ENCODE measurements at regions of chr11 and their contacts with region 1.

Region 1: GRCh38 chr11:94623120-94623735 is 56.1 kb downstream of the PIWIL4 start:
- DNase-seq: peak; percentile 36 to 44
- ATAC-seq: peak; percentile 98
- H3K4me3 ChIP-seq: no peak overlapping the region
- H3K27ac ChIP-seq: no peak overlapping the region
- H3K4me1 ChIP-seq: peaks cover 0 to 4% of the 10 kb centered on the region in 2 donors
- H3K27me3 ChIP-seq: no peaks in the 10 kb centered on the region
- CTCF ChIP-seq: peak; percentile 86 to 94 (median 89)
- POLR2A ChIP-seq: no peak

Region 2: DNA sequence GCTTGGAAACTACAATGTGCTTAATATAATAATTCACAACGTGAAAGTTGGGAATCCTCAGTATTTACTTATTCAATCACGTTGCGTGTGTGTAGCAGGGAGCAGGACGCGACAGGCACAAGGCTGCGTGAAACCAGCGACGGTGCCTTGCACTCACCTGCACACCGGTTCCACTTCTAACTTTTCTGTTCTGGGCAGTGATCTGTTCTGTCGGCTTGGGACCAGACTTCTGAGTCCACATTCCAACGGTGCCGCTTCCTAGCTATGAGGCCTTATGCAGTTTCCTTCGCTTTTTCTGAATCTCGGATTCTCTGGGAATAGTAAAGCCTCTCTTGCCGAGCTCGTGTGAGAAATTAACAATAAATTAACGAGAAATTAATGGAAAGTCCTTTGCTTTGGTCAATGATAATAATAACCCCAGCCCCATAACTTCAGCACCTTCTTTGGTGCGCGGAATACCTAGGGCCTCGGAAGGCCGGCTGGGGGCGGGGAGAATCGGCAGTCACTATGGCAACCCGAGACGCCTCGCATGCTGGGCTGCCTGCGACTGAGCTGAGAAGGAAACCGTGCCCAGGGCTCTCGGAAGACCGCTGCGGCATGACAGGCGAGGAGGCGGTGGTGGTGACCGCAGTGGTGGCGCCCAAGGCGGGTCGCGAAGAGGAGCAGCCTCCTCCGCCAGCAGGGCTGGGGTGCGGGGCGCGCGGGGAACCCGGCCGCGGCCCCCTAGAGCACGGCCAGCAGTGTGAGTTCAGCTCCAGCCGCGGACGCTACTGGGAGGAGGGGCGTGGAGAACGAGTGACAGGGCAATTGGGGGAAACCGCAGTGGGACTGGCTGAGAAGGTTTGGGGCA is 111.1 kb before region 1 on chr11 and contains the start of gene C11orf97:
- in situ Hi-C with region 1: no loop called
- intact Hi-C with region 1: no loop called
- DNase-seq: peak in 1 of 2 donors; percentile 4
- ATAC-seq: peak in 1 of 2 donors; percentile 30
- H3K4me3 ChIP-seq: peak within 1 kb of the TSS; percentile 45 to 54 (median 51)
- H3K27ac ChIP-seq: no peak within 1 kb of the TSS
- H3K4me1 ChIP-seq: peaks cover 0 to 9% of the 10 kb centered on the region in 2 donors
- H3K27me3 ChIP-seq: peaks cover 0 to 2% (median 0%) of the 10 kb centered on the region in 3 donors
- CTCF ChIP-seq: no peak
- POLR2A ChIP-seq: no peak
- total RNA-seq, gene C11orf97: not detected

Region 3: DNA sequence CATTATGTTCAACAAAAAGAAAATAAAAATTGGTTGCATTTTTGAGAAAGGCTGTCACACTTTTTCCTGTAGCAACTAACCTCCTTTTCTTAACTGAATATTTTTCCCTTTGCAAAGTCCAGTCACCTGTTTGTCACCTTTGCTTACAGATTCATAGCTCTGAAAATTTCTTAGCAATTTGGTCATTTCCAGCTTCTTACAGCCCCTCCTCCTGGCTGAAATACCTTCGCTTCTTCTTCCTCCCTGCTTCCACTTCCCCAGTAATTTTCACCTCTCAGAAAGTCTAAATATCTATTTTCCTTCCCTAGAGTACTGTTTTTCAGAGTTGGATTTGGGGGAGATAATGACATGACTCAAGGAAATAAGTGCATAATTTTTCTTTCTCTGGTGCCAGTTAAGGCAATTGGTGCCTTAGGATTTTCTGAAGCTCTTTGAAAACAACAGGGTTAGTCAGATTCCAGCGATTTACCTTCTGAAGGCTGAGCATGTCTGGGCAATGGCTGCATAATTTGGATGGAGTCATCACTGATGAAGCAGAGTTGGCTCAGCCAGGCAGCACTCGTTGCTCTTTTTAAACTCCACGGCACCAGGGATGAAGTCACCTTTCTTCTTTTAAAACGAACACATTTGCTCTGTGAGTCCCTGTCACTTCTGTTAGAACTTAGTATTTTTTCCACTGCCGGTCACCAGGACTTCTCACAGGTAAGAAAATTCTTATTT is 82.8 kb after region 1 on chr11:
- in situ Hi-C with region 1: no loop called
- intact Hi-C with region 1: loop called (anchors 2 kb)
- DNase-seq: peak; percentile 53 to 71
- ATAC-seq: peak; percentile 87 to 92
- H3K4me3 ChIP-seq: peak overlapping the region; percentile 23 to 51 (median 48)
- H3K27ac ChIP-seq: peak overlapping the region; percentile 84 to 91 (median 88)
- H3K4me1 ChIP-seq: peaks cover 28 to 30% of the 10 kb centered on the region in 2 donors
- H3K27me3 ChIP-seq: no peaks in the 10 kb centered on the region
- CTCF ChIP-seq: no peak
- POLR2A ChIP-seq: no peak

Region 4: GRCh38 chr11:94767761-94768601 is 144.8 kb after region 1 on chr11 and contains the start of gene AMOTL1:
- in situ Hi-C with region 1: loop called in 2 of 4 experiments (anchors 10 kb)
- intact Hi-C with region 1: loop called (anchors 2 kb)
- DNase-seq: peak; percentile 90
- ATAC-seq: peak; percentile 45 to 69
- H3K4me3 ChIP-seq: peak within 1 kb of the TSS; percentile 91 to 97 (median 94)
- H3K27ac ChIP-seq: peak within 1 kb of the TSS; percentile 96 to 98 (median 98)
- H3K4me1 ChIP-seq: peaks cover 35 to 46% of the 10 kb centered on the region in 2 donors
- H3K27me3 ChIP-seq: no peaks in the 10 kb centered on the region
- CTCF ChIP-seq: peak in 2 of 5 experiments; percentile 12 to 23
- POLR2A ChIP-seq: peak; percentile 83 to 93
- total RNA-seq, gene AMOTL1: 150 to 393 (median 244) TPM

Region 5: GRCh38 chr11:94800414-94800813 is 177.2 kb after region 1 on chr11:
- in situ Hi-C with region 1: no loop called
- intact Hi-C with region 1: loop called (anchors 5 kb)
- DNase-seq: no peak
- ATAC-seq: no peak
- H3K4me3 ChIP-seq: no peak overlapping the region
- H3K27ac ChIP-seq: peak overlapping the region; percentile 68 to 91 (median 82)
- H3K4me1 ChIP-seq: peaks cover 98 to 100% of the 10 kb centered on the region in 2 donors
- H3K27me3 ChIP-seq: no peaks in the 10 kb centered on the region
- CTCF ChIP-seq: no peak
- POLR2A ChIP-seq: no peak

Region 6: GRCh38 chr11:94897330-94897768 is 274.1 kb after region 1 on chr11:
- in situ Hi-C with region 1: loop called (anchors 5 to 10 kb)
- intact Hi-C with region 1: loop called (anchors 1 kb)
- DNase-seq: peak in 1 of 2 donors; percentile 41
- ATAC-seq: peak in 1 of 2 donors; percentile 60
- H3K4me3 ChIP-seq: no peak overlapping the region
- H3K27ac ChIP-seq: no peak overlapping the region
- H3K4me1 ChIP-seq: peaks cover 0 to 13% of the 10 kb centered on the region in 2 donors
- H3K27me3 ChIP-seq: no peaks in the 10 kb centered on the region
- CTCF ChIP-seq: peak; percentile 60 to 81 (median 67)
- POLR2A ChIP-seq: no peak

Region 7: GRCh38 chr11:94910779-94911178 is 287.6 kb after region 1 on chr11:
- in situ Hi-C with region 1: loop called in 2 of 4 experiments (anchors 10 kb)
- intact Hi-C with region 1: no loop called
- DNase-seq: no peak
- ATAC-seq: no peak
- H3K4me3 ChIP-seq: no peak overlapping the region
- H3K27ac ChIP-seq: no peak overlapping the region
- H3K4me1 ChIP-seq: no peaks in the 10 kb centered on the region
- H3K27me3 ChIP-seq: no peaks in the 10 kb centered on the region
- CTCF ChIP-seq: no peak
- POLR2A ChIP-seq: no peak

Region 8: GRCh38 chr11:94973099-94973968 is 350.1 kb after region 1 on chr11 and contains the starts of genes CWC15 and KDM4D:
- in situ Hi-C with region 1: no loop called
- intact Hi-C with region 1: loop called (anchors 1 kb)
- DNase-seq: peak; percentile 92 to 93
- ATAC-seq: peak; percentile 100
- H3K4me3 ChIP-seq: peak within 1 kb of the TSS; percentile 82 to 97 (median 90)
- H3K27ac ChIP-seq: peak within 1 kb of the TSS; percentile 78 to 88 (median 80)
- H3K4me1 ChIP-seq: peaks cover 14 to 17% of the 10 kb centered on the region in 2 donors
- H3K27me3 ChIP-seq: no peaks in the 10 kb centered on the region
- CTCF ChIP-seq: no peak
- POLR2A ChIP-seq: peak; percentile 40 to 56
- total RNA-seq, gene CWC15: 53.9 to 69.5 (median 60.5) TPM
- total RNA-seq, gene KDM4D: 0.12 to 1.5 (median 0.56) TPM